ENCODE measurements at regions of chr4 and their contacts with region 1.

Region 1: DNA sequence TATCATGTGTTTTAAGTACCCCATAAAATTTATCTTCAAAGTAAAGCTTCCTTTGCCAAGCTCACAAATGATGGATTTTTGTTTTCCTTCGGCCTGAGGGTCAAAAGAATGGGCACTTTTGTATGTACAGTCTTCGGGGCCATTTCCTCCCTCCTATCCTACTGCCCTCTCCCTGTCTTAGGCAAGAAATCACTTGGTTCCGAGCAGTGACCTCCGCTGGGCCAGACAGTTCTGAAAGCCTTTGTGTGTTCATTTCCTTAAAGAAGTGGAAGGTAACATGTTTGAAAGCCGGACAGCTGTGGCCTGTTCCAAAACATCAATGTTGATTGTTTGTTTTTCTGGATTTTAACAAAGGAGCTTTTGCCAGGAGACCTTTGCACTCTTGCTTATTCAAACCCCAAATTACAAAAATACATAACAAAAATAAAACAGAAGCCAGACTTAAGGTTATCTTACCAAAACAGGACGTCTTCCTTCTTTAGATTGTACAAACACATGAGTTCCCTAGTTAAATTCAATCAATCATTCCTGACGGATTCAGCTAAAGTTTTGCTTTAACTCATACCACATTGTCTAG is 110.6 kb upstream of the LIMCH1 start:
- DNase-seq: no peak
- ATAC-seq: no peak
- H3K4me3 ChIP-seq: no peak overlapping the region
- H3K27ac ChIP-seq: no peak overlapping the region
- H3K4me1 ChIP-seq: no peaks in the 10 kb centered on the region
- H3K27me3 ChIP-seq: no peaks in the 10 kb centered on the region
- CTCF ChIP-seq: no peak

Region 2: DNA sequence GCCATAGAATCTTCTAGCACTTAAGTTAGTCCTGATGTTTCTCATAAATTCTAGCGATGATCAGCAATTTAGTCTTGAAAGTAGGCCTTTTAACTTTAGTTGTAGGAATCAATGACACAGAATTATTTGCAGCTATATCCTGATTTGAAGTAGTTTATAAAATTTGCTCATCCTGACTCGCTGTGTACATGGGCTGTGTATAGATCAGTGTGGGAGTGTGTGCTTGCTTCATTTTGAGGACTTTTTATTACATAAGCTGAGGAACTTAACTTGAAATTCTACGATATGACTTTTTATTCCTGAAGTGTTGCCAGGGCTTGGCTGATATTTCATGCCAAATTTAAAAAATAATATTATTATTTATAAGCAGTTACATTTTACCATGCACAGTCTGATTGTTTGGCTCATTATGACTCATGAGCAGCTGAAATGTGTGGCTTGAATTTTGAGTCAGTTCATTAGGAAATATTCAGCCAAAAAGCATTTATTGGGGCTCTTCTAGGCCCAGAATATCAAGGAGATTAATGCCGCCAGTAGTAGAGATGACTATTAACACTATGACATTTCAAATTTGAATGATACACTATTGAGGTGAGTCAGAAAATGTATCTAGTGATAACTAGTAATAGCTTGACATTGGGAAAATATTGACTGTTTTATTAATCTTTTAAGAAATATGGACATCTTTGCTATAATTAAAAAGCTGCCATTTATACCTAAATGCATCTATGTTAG is 18.4 kb before region 1 on chr4:
- CTCF ChIA-PET with region 1: no interaction called
- POLR2A ChIA-PET with region 1: interaction called, 18 read pairs
- intact Hi-C with region 1: no loop called
- DNase-seq: peak; percentile 17
- ATAC-seq: no peak
- H3K4me3 ChIP-seq: no peak overlapping the region
- H3K27ac ChIP-seq: peak overlapping the region; percentile 39
- H3K4me1 ChIP-seq: peaks cover 30% of the 10 kb centered on the region
- H3K27me3 ChIP-seq: no peaks in the 10 kb centered on the region
- CTCF ChIP-seq: no peak

Measured in PC-3 (cell line).